ENCODE measurements at regions of chr15 and their contacts with region 1.

Region 1: DNA sequence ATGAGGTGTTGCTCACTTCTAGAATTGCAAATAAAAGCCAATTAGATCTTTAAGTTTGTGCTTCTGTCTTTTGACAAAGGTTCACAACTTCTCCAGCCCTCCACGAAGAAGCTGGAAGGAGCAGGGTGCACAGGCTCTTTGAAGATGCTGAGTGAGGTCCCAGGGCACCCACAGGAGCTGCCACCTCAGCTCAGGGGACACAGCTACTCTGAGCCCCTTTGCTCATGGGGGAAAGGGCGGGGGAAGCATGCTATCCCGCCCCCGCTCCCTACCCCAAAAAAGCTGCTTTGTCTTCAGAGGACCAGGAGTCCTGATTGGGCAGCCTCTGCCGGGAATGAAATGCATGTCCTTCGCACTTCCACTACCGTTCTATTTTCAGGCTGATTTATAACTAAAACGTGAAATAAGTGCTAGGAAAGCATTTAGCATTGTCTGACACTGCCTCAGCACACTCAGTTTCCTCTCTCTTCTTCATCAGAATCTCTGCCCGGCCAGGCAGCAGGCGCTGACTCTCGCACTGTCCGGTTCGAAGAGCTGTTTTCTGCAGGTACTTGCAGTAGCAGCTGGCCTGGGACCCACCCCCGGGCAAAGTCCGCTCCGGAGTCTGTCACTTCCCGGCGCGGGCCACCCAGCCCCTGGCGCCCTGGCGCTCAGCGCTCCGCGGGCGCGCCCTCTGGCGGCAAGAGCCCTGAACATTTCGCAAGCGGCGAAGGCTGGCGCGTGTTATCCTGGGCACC is 45.5 kb upstream of the KLHL25 start:
- DNase-seq: peak; percentile 76 to 87
- ATAC-seq: peak; percentile 95 to 99 (median 98)
- H3K4me3 ChIP-seq: no peak overlapping the region
- H3K4me3 Mint-ChIP-seq: peak overlapping the region; percentile 45
- H3K27ac ChIP-seq: no peak overlapping the region
- H3K27ac Mint-ChIP-seq: no peak overlapping the region
- H3K4me1 ChIP-seq: peaks cover 9% of the 10 kb centered on the region
- H3K4me1 Mint-ChIP-seq: no peaks in the 10 kb centered on the region
- H3K27me3 ChIP-seq: no peaks in the 10 kb centered on the region
- H3K27me3 Mint-ChIP-seq: peaks cover 7 to 8% of the 10 kb centered on the region in 2 donors
- CTCF ChIP-seq: peak; percentile 90

Region 2: GRCh38 chr15:85485956-85486567 is 354.2 kb before region 1 on chr15:
- intact Hi-C with region 1: loop called (anchors 1 kb)
- DNase-seq: peak in 1 of 2 donors; percentile 87
- ATAC-seq: peak; percentile 96 to 99 (median 98)
- H3K4me3 ChIP-seq: no peak overlapping the region
- H3K4me3 Mint-ChIP-seq: no peak overlapping the region
- H3K27ac ChIP-seq: no peak overlapping the region
- H3K27ac Mint-ChIP-seq: no peak overlapping the region
- H3K4me1 ChIP-seq: no peaks in the 10 kb centered on the region
- H3K4me1 Mint-ChIP-seq: peaks cover 27 to 32% of the 10 kb centered on the region in 2 donors
- H3K27me3 ChIP-seq: no peaks in the 10 kb centered on the region
- H3K27me3 Mint-ChIP-seq: no peaks in the 10 kb centered on the region
- CTCF ChIP-seq: peak; percentile 73

Region 3: DNA sequence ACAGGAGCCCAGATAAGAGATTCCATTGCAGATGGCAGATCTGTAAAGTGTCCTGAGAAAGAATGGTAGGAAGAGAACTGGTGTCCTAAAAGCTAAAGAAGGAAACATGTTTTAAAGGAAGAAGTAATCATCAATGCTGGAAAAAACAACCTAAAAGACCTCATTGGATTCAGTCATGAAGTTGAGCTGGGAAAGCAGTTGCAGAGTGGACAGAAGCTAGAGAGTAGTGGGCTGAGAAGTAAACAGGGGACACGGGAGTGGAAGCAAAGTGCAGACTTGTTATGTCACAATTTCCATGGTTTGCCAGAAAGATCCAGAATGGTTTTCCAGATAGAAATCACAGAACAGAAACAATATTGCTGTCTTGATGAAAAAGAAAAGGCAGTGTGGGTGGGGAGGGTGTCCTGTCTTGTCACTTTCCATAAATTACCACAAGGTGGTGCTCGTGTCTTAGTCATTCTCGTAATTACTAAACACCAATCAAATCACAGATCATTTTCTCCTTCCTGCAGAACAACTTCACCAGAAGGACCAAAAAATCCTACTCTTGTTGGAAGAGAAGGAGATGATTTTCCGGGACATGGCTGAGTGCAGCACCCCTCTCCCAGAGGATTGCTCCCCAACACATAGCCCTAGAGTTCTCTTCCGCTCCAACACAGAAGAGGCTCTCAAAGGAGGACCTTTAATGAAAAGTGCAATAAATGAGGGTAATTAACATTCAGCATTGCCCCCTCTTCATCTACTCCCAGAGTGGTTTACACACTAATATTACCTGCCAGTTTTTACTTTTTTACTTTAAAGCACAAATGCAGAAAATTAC is 110.0 kb before region 1 on chr15:
- intact Hi-C with region 1: loop called (anchors 1 kb)
- DNase-seq: peak in 1 of 2 donors; percentile 85
- ATAC-seq: peak; percentile 82 to 88 (median 84)
- H3K4me3 ChIP-seq: no peak overlapping the region
- H3K4me3 Mint-ChIP-seq: no peak overlapping the region
- H3K27ac ChIP-seq: no peak overlapping the region
- H3K27ac Mint-ChIP-seq: peak overlapping the region; percentile 68 to 80
- H3K4me1 ChIP-seq: no peaks in the 10 kb centered on the region
- H3K4me1 Mint-ChIP-seq: peaks cover 9 to 22% of the 10 kb centered on the region in 2 donors
- H3K27me3 ChIP-seq: no peaks in the 10 kb centered on the region
- H3K27me3 Mint-ChIP-seq: no peaks in the 10 kb centered on the region
- CTCF ChIP-seq: peak; percentile 78

Measured in natural killer cell (primary cell).